ENCODE measurements at regions of chr1 and their contacts with region 1.

Region 1: DNA sequence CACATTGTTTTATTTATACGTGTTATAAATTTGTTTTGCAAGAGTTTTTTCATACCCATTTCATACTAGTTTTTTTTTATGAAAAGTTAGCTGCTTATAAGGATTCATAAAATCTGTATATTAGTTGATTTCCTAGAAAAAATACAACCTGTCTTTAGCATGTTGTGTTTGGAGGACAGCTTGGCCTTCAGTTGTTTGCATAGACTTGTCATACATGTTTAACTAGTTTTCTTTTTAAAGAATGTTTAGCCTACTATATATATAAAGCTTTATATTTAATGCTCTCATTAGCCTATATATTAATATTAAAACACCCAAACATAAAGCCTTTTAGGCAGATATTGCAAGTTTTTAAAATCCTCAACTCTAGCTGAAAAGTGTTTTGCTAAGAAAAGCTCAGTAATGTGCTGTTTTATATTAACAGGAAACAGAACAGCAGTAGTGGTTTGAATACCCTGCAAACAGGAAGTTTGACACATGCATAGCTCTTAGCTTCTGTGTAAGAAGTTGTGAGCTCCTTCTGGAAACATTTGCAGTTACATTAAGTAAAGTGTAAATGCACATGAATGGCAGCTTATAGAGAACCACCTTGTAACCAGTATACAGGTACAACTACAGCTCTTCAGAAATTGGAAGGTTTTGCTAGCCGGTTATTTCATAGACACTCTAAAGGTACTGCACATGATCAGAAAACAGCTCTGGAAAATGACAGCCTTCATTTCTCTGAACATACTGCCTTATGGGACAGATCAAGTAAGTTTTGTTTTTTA is at the start of gene PRKACB:
- DNase-seq: no peak
- ATAC-seq: peak; percentile 86
- H3K4me3 Mint-ChIP-seq: peak within 1 kb of the TSS; percentile 89
- H3K27ac Mint-ChIP-seq: peak within 1 kb of the TSS; percentile 97
- H3K4me1 Mint-ChIP-seq: peaks cover 52% of the 10 kb centered on the region
- H3K27me3 Mint-ChIP-seq: no peaks in the 10 kb centered on the region
- CTCF ChIP-seq: no peak
- total RNA-seq, gene PRKACB: 30.0 and 33.0 TPM in 2 replicates

Region 2: DNA sequence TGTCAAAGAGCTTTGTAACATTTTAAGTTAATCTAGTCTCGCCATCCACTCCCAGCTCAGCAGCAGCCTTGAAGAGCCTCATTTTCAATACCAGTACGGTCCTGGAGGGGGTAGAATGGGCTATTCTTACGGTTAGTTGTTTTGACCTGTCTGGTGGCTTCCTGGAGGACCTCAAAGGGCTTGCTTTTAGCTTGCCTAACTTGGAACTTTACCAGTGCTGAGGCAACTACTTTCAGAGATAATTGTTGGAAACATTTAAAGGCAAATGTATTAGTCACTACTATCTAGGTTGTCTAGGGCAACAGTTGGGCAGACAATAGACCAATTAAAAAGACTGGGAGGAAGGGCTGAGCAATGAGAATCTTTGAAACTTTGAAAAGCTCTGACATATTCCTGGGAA is 201.1 kb before region 1 on chr1:
- CTCF ChIA-PET with region 1: no interaction called
- POLR2A ChIA-PET with region 1: no interaction called
- intact Hi-C with region 1: no loop called
- DNase-seq: no peak
- ATAC-seq: no peak
- H3K4me3 Mint-ChIP-seq: no peak overlapping the region
- H3K27ac Mint-ChIP-seq: no peak overlapping the region
- H3K4me1 Mint-ChIP-seq: no peaks in the 10 kb centered on the region
- H3K27me3 Mint-ChIP-seq: peaks cover 2% of the 10 kb centered on the region
- CTCF ChIP-seq: no peak

Region 3: GRCh38 chr1:84156210-84156621 is 12.2 kb after region 1 on chr1:
- CTCF ChIA-PET with region 1: interaction called, 5 read pairs
- POLR2A ChIA-PET with region 1: interaction called, 10 read pairs
- intact Hi-C with region 1: loop called (anchors 1 kb)
- DNase-seq: no peak
- ATAC-seq: peak; percentile 76
- H3K4me3 Mint-ChIP-seq: no peak overlapping the region
- H3K27ac Mint-ChIP-seq: peak overlapping the region; percentile 15
- H3K4me1 Mint-ChIP-seq: peaks cover 83% of the 10 kb centered on the region
- H3K27me3 Mint-ChIP-seq: no peaks in the 10 kb centered on the region
- CTCF ChIP-seq: no peak

Region 4: DNA sequence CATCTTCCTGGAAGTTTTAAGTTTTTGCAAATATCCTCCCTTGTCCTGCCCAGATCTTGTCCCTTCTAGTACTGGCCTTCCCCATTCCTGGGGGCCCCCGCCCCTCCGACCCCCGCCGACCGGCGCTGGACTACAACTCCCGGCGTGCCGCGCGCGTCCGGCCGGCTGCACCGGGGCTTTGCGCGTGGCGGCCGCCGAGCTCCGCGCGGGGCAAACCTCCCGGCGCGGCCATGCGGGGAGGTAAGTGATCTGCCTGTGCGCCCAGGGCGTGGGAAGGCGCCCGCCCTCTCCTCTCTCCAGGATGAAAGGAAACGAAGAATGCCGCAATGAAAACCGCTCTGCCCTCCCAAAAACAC is 154.3 kb after region 1 on chr1:
- CTCF ChIA-PET with region 1: interaction called, 5 read pairs
- POLR2A ChIA-PET with region 1: interaction called, 14 read pairs
- intact Hi-C with region 1: loop called (anchors 1 kb)
- DNase-seq: peak; percentile 58
- ATAC-seq: peak; percentile 91
- H3K4me3 Mint-ChIP-seq: peak overlapping the region; percentile 90
- H3K27ac Mint-ChIP-seq: peak overlapping the region; percentile 74
- H3K4me1 Mint-ChIP-seq: peaks cover 34% of the 10 kb centered on the region
- H3K27me3 Mint-ChIP-seq: peaks cover 8% of the 10 kb centered on the region
- CTCF ChIP-seq: no peak

Region 5: GRCh38 chr1:84506002-84506728 is 362.2 kb after region 1 on chr1 and contains the starts of genes GNG5 and SPATA1:
- CTCF ChIA-PET with region 1: no interaction called
- POLR2A ChIA-PET with region 1: interaction called, 17 read pairs
- intact Hi-C with region 1: no loop called
- DNase-seq: peak; percentile 98
- ATAC-seq: peak; percentile 87
- H3K4me3 Mint-ChIP-seq: peak within 1 kb of the TSS; percentile 96
- H3K27ac Mint-ChIP-seq: peak within 1 kb of the TSS; percentile 98
- H3K4me1 Mint-ChIP-seq: peaks cover 37% of the 10 kb centered on the region
- H3K27me3 Mint-ChIP-seq: no peaks in the 10 kb centered on the region
- CTCF ChIP-seq: no peak
- total RNA-seq, gene GNG5: 57.0 and 63.5 TPM in 2 replicates
- total RNA-seq, gene SPATA1: 4.6 and 4.7 TPM in 2 replicates

Region 6: DNA sequence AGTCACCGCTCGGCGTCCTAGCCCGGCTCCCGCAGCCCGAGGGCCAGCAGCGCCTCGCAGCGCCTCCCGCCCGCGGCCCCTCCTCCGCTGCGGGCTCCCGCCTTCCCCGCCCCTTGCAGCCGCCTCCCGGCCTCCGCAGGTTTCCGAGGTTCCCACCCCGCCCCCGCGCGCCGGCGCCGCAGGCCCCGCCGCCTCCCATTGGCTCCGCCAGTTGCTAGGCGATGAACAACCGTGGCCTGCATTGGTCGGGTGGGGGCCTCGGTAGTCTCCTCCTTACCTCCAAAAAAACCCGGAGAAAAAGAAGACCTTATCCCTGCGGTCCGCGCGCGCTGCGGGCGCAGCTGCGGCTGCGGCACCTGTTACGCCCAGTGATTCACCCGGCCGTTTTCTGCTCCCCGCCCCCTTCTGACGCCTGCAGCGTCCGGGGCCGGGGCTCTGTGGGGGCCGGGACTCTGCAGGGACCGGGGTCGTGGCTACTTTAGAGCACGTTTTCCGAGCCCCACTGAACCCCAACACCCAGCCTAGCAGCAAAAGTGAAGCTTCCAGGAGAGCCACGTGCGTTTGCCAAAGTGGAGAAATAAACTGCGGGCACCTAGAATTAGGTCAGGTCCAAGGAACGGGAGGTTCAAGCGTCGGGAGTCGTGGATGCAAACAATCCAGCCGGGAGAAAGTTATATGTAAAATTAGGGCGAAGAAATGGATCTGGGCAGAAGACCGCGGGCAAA is 546.6 kb after region 1 on chr1 and contains the start of gene SSX2IP:
- CTCF ChIA-PET with region 1: interaction called, 3 read pairs
- POLR2A ChIA-PET with region 1: no interaction called
- intact Hi-C with region 1: loop called (anchors 1 kb)
- DNase-seq: peak; percentile 100
- ATAC-seq: peak; percentile 86
- H3K4me3 Mint-ChIP-seq: peak within 1 kb of the TSS; percentile 91
- H3K27ac Mint-ChIP-seq: peak within 1 kb of the TSS; percentile 89
- H3K4me1 Mint-ChIP-seq: peaks cover 32% of the 10 kb centered on the region
- H3K27me3 Mint-ChIP-seq: no peaks in the 10 kb centered on the region
- CTCF ChIP-seq: no peak
- total RNA-seq, gene SSX2IP: 4.5 and 5.4 TPM in 2 replicates

Region 7: DNA sequence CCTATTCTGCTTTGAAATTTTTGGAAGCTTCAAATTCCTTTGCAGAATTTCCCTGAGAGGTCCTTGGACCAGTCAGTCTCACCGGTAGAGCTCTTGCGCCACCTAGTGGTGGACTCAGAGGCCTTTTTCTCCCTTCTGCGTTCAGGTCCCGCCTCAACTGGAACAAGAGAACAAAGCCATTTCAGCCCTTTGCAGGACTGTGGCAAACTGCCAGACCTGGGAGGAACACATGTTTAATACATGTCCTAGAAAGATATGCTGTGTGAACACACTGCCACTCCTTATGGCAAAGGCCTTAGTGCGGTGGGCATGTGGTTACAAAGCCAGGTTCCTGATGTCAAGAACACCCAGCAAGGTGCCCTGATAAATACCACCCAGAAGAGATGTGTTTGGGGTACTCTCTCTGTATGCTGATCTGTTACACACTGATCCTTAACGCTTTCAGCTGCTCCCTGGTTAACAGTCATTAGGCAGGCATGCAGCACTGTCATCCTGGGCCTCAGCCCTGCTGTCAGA is 628.5 kb after region 1 on chr1:
- CTCF ChIA-PET with region 1: interaction called, 13 read pairs
- POLR2A ChIA-PET with region 1: no interaction called
- intact Hi-C with region 1: loop called (anchors 1 kb)
- DNase-seq: peak; percentile 58
- ATAC-seq: peak; percentile 71
- H3K4me3 Mint-ChIP-seq: no peak overlapping the region
- H3K27ac Mint-ChIP-seq: no peak overlapping the region
- H3K4me1 Mint-ChIP-seq: no peaks in the 10 kb centered on the region
- H3K27me3 Mint-ChIP-seq: peaks cover 5% of the 10 kb centered on the region
- CTCF ChIP-seq: peak; percentile 43